T-cell (primary cell): ENCODE measurements at regions of chr11 and their contacts with region 1.

Region 1: DNA sequence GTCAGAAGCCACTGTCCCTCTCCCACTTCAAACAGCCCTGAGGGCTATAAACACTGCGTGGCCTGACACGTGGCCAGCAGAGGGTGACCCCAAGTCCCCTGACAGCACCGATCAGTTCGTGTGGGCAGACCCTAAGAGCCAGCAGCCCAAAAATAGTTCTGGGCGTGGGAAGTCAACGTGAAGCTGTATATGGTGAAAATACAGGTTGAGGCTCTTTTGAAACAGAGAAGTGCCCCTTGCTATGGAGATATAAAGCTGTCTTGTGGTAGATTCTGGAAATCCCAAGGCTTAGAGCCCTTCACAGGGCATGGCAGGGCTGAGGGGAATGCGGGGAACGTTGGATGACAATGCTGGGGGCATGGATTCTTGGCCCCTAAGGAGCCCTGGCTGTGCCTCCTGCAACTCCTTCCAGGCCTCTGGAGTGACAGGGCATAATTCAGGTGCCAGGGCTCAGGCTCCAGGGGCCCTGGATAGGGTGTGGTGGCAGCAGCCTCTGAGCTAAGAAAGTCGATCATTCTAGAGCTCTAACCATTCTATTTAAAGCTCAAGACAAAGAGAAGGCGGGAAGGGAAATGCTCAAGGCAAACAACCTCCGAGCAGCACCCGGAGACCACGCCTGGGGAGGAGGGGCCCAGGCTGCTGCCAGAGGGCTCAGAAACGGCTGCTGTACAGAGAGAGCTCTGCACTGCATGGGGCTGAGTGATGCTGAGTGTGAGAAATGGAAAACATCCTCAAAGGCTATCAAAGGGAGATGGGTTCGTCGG is 60.4 kb upstream of the CD5 start:
- DNase-seq: peak; percentile 69 to 97 (median 89)
- ATAC-seq: peak; percentile 97 to 100 (median 99)
- H3K4me3 ChIP-seq: peak overlapping the region in 1 of 2 donors; percentile 39
- H3K4me3 Mint-ChIP-seq: peak overlapping the region; percentile 68 to 73 (median 68)
- H3K27ac ChIP-seq: peak overlapping the region; percentile 98
- H3K27ac Mint-ChIP-seq: peak overlapping the region; percentile 94 to 97
- H3K4me1 ChIP-seq: peaks cover 24 to 55% of the 10 kb centered on the region in 2 experiments
- H3K4me1 Mint-ChIP-seq: peaks cover 46 to 62% (median 61%) of the 10 kb centered on the region in 3 donors
- H3K27me3 ChIP-seq: no peaks in the 10 kb centered on the region
- H3K27me3 Mint-ChIP-seq: no peaks in the 10 kb centered on the region

Region 2: DNA sequence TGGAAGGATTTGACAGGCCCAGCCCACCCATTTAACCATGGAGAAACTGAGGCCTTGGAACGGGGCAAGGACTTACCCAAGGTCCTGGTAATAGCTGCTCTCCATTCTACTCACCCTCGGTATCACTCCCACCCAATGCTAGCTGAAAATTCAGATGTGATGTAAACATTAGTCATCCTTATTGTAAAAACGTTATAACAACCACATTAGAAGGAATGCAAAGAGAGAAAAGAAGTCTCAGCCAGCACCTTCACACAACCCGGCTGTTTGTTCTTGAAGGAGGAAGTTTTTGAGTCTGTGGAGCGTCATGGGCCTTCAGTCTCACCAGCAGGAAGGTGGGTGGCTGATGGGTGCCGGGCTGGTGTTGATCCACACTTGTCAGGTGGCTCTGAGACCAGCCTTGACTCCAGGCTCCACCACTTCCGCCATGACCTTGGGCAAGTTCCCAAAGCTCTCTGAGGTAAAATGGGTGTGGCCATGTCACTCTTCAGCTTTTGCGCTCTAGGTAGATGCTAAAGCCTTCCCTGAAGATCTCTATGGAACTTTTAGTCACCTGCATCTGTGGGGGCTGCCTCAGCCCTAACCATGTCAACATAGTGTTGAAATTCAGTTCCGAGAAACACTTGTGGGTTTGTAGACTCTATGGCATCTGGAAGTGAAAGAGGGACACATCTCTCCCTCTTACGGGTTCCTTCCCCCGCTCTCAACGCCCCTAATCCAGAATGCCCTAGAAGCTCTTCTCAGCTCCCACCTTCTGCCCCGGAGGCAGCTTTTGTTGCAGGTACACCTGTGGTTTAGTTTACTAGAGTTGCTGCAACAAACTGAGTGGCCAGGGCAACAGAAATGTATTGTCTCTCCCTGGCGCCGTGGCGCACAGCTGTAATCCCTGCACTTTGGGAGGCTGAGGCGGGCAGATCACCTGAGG is 55.7 kb before region 1 on chr11:
- CTCF ChIA-PET with region 1: interaction called in 1 of 2 experiments, 10 read pairs
- POLR2A ChIA-PET with region 1: interaction called, 7 to 21 read pairs
- DNase-seq: peak; percentile 69 to 99 (median 94)
- ATAC-seq: peak; percentile 90 to 91 (median 90)
- H3K4me3 ChIP-seq: peak overlapping the region; percentile 36 to 41
- H3K4me3 Mint-ChIP-seq: peak overlapping the region; percentile 77 to 94 (median 77)
- H3K27ac ChIP-seq: peak overlapping the region; percentile 98
- H3K27ac Mint-ChIP-seq: peak overlapping the region; percentile 95 to 96
- H3K4me1 ChIP-seq: peaks cover 64 to 92% of the 10 kb centered on the region in 2 experiments
- H3K4me1 Mint-ChIP-seq: peaks cover 92 to 94% (median 93%) of the 10 kb centered on the region in 3 donors
- H3K27me3 ChIP-seq: no peaks in the 10 kb centered on the region
- H3K27me3 Mint-ChIP-seq: no peaks in the 10 kb centered on the region

Region 3: DNA sequence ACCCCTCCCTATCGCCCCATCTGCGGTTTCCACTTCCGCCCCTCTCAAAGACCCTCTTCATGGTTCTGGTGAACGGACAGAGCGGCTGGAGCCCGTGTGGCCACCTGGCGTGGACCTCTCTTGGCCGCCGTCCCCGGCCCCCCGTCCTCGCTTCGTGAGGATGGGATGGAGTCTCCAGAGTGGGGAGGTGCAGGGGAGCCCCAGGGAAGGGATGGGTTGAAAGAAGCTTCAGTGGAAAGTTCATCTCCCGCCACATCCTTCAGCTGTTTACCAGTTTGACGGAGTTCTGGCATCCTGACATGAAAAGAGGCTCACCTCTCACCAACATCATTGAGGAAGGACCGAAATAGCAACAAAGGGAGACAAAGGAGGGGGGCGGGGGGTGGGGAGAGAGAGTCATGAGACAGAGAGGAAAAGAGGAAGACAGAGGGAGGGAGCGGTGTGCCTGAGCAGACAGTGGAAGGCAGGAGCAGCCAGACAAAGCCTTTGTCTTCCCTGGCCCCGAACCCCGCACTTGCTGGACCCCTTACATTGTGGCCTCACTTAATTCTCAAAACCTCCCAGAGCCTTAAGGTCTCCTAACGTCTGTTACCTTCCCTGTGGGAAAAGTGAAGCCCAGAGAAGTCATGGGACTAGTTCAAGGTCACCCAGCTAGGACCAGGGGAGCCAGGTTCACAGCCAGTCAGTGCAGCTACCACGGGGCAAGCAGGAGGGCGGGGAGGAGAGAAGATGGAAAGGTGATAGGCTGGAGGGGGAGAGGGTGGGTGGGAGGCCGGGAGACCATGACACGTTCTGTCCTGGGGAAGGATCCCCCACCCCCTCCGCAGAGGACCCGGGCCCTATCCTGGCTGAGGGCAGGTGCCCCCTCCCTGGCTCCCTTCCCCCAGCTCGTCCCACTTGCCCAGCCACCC is 15.6 kb before region 1 on chr11:
- CTCF ChIA-PET with region 1: interaction called in 1 of 2 experiments, 3 read pairs
- POLR2A ChIA-PET with region 1: interaction called, 5 to 13 read pairs
- DNase-seq: peak; percentile 40 to 86 (median 61)
- ATAC-seq: peak; percentile 39 to 49 (median 44)
- H3K4me3 ChIP-seq: peak overlapping the region; percentile 29 to 53
- H3K4me3 Mint-ChIP-seq: peak overlapping the region; percentile 57 to 87 (median 68)
- H3K27ac ChIP-seq: peak overlapping the region; percentile 92
- H3K27ac Mint-ChIP-seq: peak overlapping the region; percentile 93 to 94
- H3K4me1 ChIP-seq: peaks cover 60 to 83% of the 10 kb centered on the region in 2 experiments
- H3K4me1 Mint-ChIP-seq: peaks cover 86 to 98% (median 90%) of the 10 kb centered on the region in 3 donors
- H3K27me3 ChIP-seq: no peaks in the 10 kb centered on the region
- H3K27me3 Mint-ChIP-seq: peaks cover 0 to 1% of the 10 kb centered on the region in 2 donors

Region 4: DNA sequence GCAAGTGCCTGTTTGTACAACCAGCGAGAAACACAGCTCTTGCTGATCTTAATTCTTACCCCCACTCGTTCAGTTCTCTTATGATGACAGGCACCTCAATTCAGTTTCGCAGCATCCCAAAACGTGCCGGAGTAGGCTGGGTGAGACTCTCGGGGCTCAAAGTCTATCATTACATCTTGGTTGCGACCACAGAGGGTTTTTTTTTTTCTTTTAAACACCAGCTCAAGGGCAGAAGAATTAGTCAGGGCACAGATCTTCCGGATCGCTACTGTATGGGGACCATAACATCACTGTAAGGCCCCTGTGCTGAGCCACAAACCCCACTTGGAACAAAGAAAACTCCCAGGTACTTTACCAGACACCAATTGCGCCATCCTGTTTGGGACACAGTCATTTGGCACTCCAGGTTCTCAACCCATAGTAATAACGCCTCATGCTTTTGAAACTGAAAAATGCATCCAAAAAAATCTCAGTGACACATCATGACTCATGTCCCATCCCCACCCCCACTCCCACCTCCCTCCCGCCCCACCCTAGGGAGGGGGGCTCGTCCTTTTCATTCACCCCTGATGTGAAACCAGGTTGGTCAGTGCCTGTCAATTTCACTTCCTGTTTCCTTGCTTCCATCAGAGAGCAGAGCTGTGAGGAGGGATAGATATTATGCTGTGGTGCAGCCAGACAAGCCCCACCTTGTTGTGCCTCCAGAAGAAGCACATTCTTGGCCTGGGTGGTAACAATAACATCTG is 19.3 kb after region 1 on chr11:
- CTCF ChIA-PET with region 1: interaction called in 1 of 2 experiments, 13 read pairs
- POLR2A ChIA-PET with region 1: interaction called, 5 to 9 read pairs
- DNase-seq: peak in 31 of 35 experiments; percentile 22 to 88 (median 48)
- ATAC-seq: peak; percentile 72 to 85 (median 74)
- H3K4me3 ChIP-seq: peak overlapping the region in 1 of 2 donors; percentile 26
- H3K4me3 Mint-ChIP-seq: peak overlapping the region; percentile 74 to 80 (median 79)
- H3K27ac ChIP-seq: peak overlapping the region; percentile 90
- H3K27ac Mint-ChIP-seq: peak overlapping the region; percentile 97
- H3K4me1 ChIP-seq: peaks cover 21 to 80% of the 10 kb centered on the region in 2 experiments
- H3K4me1 Mint-ChIP-seq: peaks cover 64 to 75% (median 68%) of the 10 kb centered on the region in 3 donors
- H3K27me3 ChIP-seq: no peaks in the 10 kb centered on the region
- H3K27me3 Mint-ChIP-seq: no peaks in the 10 kb centered on the region

Region 5: GRCh38 chr11:61083601-61084147 is 41.7 kb after region 1 on chr11:
- CTCF ChIA-PET with region 1: interaction called in 1 of 2 experiments, 4 read pairs
- POLR2A ChIA-PET with region 1: interaction called, 3 to 11 read pairs
- DNase-seq: peak; percentile 57 to 88 (median 71)
- ATAC-seq: peak; percentile 68 to 76 (median 72)
- H3K4me3 ChIP-seq: peak overlapping the region in 1 of 2 donors; percentile 12
- H3K4me3 Mint-ChIP-seq: peak overlapping the region; percentile 72 to 86 (median 78)
- H3K27ac ChIP-seq: peak overlapping the region; percentile 89
- H3K27ac Mint-ChIP-seq: peak overlapping the region; percentile 99 to 100
- H3K4me1 ChIP-seq: peaks cover 45 to 54% of the 10 kb centered on the region in 2 experiments
- H3K4me1 Mint-ChIP-seq: peaks cover 54 to 63% (median 55%) of the 10 kb centered on the region in 3 donors
- H3K27me3 ChIP-seq: no peaks in the 10 kb centered on the region
- H3K27me3 Mint-ChIP-seq: no peaks in the 10 kb centered on the region

Region 6: GRCh38 chr11:61129639-61130523 is 87.9 kb after region 1 on chr11:
- CTCF ChIA-PET with region 1: interaction called in 1 of 2 experiments, 4 read pairs
- POLR2A ChIA-PET with region 1: interaction called in 1 of 2 experiments, 13 read pairs
- DNase-seq: peak; percentile 78 to 94 (median 87)
- ATAC-seq: peak; percentile 75 to 95 (median 86)
- H3K4me3 ChIP-seq: no peak overlapping the region
- H3K4me3 Mint-ChIP-seq: peak overlapping the region in 2 of 3 donors; percentile 3 to 47
- H3K27ac ChIP-seq: peak overlapping the region; percentile 39
- H3K27ac Mint-ChIP-seq: peak overlapping the region; percentile 71 to 86
- H3K4me1 ChIP-seq: peaks cover 6 to 23% of the 10 kb centered on the region in 2 experiments
- H3K4me1 Mint-ChIP-seq: peaks cover 20 to 35% (median 24%) of the 10 kb centered on the region in 3 donors
- H3K27me3 ChIP-seq: no peaks in the 10 kb centered on the region
- H3K27me3 Mint-ChIP-seq: no peaks in the 10 kb centered on the region

Region 7: GRCh38 chr11:62671575-62672389 is 1629.8 kb after region 1 on chr11 and contains the starts of genes LBHD1 and UQCC3:
- CTCF ChIA-PET with region 1: no interaction called
- POLR2A ChIA-PET with region 1: no interaction called
- DNase-seq: peak; percentile 32 to 81 (median 60)
- ATAC-seq: peak; percentile 72 to 80 (median 78)
- H3K4me3 ChIP-seq: peak within 1 kb of the TSS; percentile 82 to 96
- H3K4me3 Mint-ChIP-seq: peak within 1 kb of the TSS; percentile 98 to 99 (median 99)
- H3K27ac ChIP-seq: peak within 1 kb of the TSS; percentile 65
- H3K27ac Mint-ChIP-seq: peak within 1 kb of the TSS; percentile 98 to 99
- H3K4me1 ChIP-seq: peaks cover 7 to 45% of the 10 kb centered on the region in 2 experiments
- H3K4me1 Mint-ChIP-seq: peaks cover 57 to 62% (median 59%) of the 10 kb centered on the region in 3 donors
- H3K27me3 ChIP-seq: no peaks in the 10 kb centered on the region
- H3K27me3 Mint-ChIP-seq: no peaks in the 10 kb centered on the region
- total RNA-seq, gene LBHD1: 15.5 to 24.7 (median 20.7) TPM
- total RNA-seq, gene UQCC3: 2.7 to 9.3 (median 8.1) TPM